H1 (cell line): ENCODE measurements at regions of chr1 and their contacts with region 1.

Region 1: GRCh38 chr1:2174348-2175054 is 20.1 kb downstream of the FAAP20 start:
- DNase-seq: peak; percentile 70 to 86
- H3K4me3 ChIP-seq: no peak overlapping the region
- H3K27ac ChIP-seq: no peak overlapping the region
- H3K4me1 ChIP-seq: no peaks in the 10 kb centered on the region; a peak in 2 of 7 replicates
- H3K27me3 ChIP-seq: no peaks in the 10 kb centered on the region
- CTCF ChIP-seq: peak in 2 of 3 experiments; percentile 94 to 98; a peak in 3 of 4 replicates
- EP300 ChIP-seq: no peak
- POLR2A ChIP-seq: no peak
- RAD21 ChIP-seq: peak; percentile 73 to 82

Region 2: GRCh38 chr1:2084306-2084705 is 90.2 kb before region 1 on chr1:
- CTCF ChIA-PET with region 1: no interaction called
- POLR2A ChIA-PET with region 1: no interaction called
- DNase-seq: no peak
- H3K4me3 ChIP-seq: no peak overlapping the region
- H3K27ac ChIP-seq: no peak overlapping the region
- H3K4me1 ChIP-seq: peaks cover 0 to 6% (median 4%) of the 10 kb centered on the region in 4 experiments; a peak in 3 of 7 replicates
- H3K27me3 ChIP-seq: no peaks in the 10 kb centered on the region
- CTCF ChIP-seq: no peak
- EP300 ChIP-seq: no peak
- POLR2A ChIP-seq: no peak
- RAD21 ChIP-seq: no peak

Region 3: GRCh38 chr1:2115681-2116341 is 58.7 kb before region 1 on chr1:
- CTCF ChIA-PET with region 1: interaction called, 22 read pairs
- POLR2A ChIA-PET with region 1: no interaction called
- DNase-seq: peak; percentile 51 to 76
- H3K4me3 ChIP-seq: peak overlapping the region in 3 of 4 experiments; percentile 25 to 36 (median 32); a peak in 6 of 8 replicates
- H3K27ac ChIP-seq: no peak overlapping the region; the same call in 1 of the 2 replicates
- H3K4me1 ChIP-seq: peaks cover 0 to 18% (median 13%) of the 10 kb centered on the region in 4 experiments; a peak in 6 of 7 replicates
- H3K27me3 ChIP-seq: no peaks in the 10 kb centered on the region
- CTCF ChIP-seq: no peak; a peak in 1 of 4 replicates
- EP300 ChIP-seq: no peak
- POLR2A ChIP-seq: no peak
- RAD21 ChIP-seq: no peak

Region 4: GRCh38 chr1:2141036-2141435 is 33.5 kb before region 1 on chr1:
- CTCF ChIA-PET with region 1: interaction called, 20 read pairs
- POLR2A ChIA-PET with region 1: no interaction called
- DNase-seq: no peak
- H3K4me3 ChIP-seq: no peak overlapping the region
- H3K27ac ChIP-seq: no peak overlapping the region
- H3K4me1 ChIP-seq: no peaks in the 10 kb centered on the region
- H3K27me3 ChIP-seq: no peaks in the 10 kb centered on the region
- CTCF ChIP-seq: no peak
- EP300 ChIP-seq: no peak
- POLR2A ChIP-seq: no peak
- RAD21 ChIP-seq: no peak

Region 5: GRCh38 chr1:2148691-2149090 is 25.8 kb before region 1 on chr1:
- CTCF ChIA-PET with region 1: interaction called, 12 read pairs
- POLR2A ChIA-PET with region 1: no interaction called
- DNase-seq: no peak
- H3K4me3 ChIP-seq: no peak overlapping the region
- H3K27ac ChIP-seq: no peak overlapping the region
- H3K4me1 ChIP-seq: no peaks in the 10 kb centered on the region
- H3K27me3 ChIP-seq: no peaks in the 10 kb centered on the region
- CTCF ChIP-seq: no peak
- EP300 ChIP-seq: no peak
- POLR2A ChIP-seq: no peak
- RAD21 ChIP-seq: no peak

Region 6: DNA sequence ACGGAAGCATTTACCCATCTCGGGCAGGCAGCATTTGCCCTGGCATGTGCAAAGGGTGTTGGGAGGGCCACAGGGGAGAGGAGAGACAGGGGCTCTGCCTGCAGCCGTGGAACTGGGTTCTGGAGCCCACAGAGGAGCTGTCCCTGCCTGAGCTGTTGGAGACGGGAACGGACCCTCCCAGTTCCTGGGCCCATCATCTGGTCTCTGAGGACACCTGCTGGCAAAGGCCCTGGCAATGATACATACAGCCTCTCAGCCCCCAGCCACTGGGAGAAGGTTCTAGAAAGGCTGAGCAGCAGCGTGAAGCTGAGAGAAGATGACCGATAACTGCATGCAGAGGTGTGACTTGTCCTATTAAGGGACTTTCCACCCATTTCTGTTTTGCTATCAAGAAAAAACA is 11.3 kb before region 1 on chr1:
- CTCF ChIA-PET with region 1: interaction called, 47 read pairs
- POLR2A ChIA-PET with region 1: no interaction called
- DNase-seq: no peak
- H3K4me3 ChIP-seq: no peak overlapping the region
- H3K27ac ChIP-seq: no peak overlapping the region
- H3K4me1 ChIP-seq: peaks cover 0 to 3% (median 0%) of the 10 kb centered on the region in 4 experiments; a peak in 2 of 7 replicates
- H3K27me3 ChIP-seq: no peaks in the 10 kb centered on the region
- CTCF ChIP-seq: peak in 1 of 3 experiments; percentile 14; a peak in 2 of 4 replicates
- EP300 ChIP-seq: no peak
- POLR2A ChIP-seq: no peak
- RAD21 ChIP-seq: peak; percentile 21 to 43; a peak in 2 of 4 replicates

Region 7: DNA sequence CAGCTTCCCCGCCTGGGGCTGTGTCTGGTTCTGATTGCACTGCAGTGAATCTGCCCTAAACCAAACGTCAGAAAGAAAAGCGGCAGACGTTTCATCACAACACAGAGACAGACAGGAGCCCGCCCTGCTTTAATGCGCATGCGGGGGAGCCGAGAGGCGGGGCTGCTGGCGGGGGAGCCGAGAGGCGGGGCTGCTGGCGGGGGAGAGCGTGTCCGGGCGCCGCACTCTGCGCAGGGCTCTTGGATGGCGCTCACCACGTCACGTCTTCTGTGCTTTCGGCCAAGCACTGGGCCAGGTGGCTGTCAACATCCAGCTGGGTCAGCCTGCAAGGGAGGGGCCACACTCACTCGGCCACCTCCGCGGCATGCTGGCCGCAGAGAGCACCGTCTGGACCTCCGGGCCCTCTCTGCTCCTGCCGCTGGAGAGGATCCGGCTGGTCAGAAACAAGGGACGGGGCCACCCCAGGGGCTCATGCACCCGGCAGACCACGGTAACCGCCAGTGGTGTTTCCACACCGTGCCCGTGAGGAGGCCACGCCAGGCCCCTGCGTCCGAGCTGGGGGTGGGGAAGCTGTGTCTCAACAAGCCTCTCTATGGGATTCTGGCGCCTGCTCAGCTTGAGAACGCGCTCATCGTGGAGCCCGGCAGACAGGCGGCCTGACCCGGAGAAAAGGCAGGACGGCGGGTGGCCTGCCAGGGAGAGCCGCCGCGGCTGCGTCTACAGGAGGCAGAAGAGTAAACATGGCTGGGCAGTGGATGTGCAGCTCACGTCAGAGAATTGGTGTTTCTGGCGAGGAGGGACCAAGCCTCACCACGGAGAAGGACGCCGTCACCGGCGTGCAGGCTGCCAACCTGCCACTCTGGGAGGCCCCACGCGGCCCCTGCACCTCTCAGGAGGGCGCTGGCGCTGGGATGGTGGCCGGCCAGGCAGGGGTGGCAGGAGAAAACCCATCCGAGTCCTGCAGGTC is 15.2 kb after region 1 on chr1:
- CTCF ChIA-PET with region 1: interaction called, 11 read pairs
- POLR2A ChIA-PET with region 1: interaction called, 5 read pairs
- DNase-seq: peak; percentile 51 to 93
- H3K4me3 ChIP-seq: peak overlapping the region in 3 of 4 experiments; percentile 28 to 49 (median 48); a peak in 5 of 8 replicates
- H3K27ac ChIP-seq: no peak overlapping the region
- H3K4me1 ChIP-seq: peaks cover 0 to 16% (median 7%) of the 10 kb centered on the region in 4 experiments; a peak in 5 of 7 replicates
- H3K27me3 ChIP-seq: no peaks in the 10 kb centered on the region
- CTCF ChIP-seq: no peak
- EP300 ChIP-seq: no peak; a peak in 1 of 3 replicates
- POLR2A ChIP-seq: no peak
- RAD21 ChIP-seq: no peak